ENCODE measurements at regions of chr7 and their contacts with region 1.

Region 1: DNA sequence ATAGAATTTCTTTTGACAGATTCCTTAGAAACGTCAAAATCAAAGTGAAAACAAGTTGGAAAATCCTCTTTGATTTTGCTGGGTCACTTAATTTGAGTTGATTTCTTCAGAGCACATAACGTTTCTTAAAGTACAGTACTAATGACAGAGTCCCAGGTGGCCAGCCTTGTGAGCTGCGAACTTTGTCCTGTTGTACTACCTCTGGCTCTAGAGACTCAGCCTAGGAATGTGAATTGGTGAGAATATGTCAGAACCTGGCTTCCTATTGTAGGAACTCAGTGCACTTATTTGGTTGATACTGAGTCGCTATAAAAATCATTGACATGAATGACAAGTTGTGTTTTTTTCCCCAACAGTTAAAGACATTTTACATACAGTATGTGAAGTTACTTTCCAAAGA is 20.2 kb downstream of the SDK1 start:
- DNase-seq: peak in 1 of 2 experiments; percentile 19
- H3K4me3 ChIP-seq: no peak overlapping the region
- H3K4me3 Mint-ChIP-seq: peak overlapping the region; percentile 63
- H3K27ac Mint-ChIP-seq: peak overlapping the region; percentile 54
- H3K4me1 ChIP-seq: 0 out of 2 replicates have a peak, but pooled peaks cover 5% of the 10 kb centered on the region
- H3K4me1 Mint-ChIP-seq: peaks cover 7% of the 10 kb centered on the region
- H3K27me3 ChIP-seq: no peaks in the 10 kb centered on the region
- H3K27me3 Mint-ChIP-seq: no peaks in the 10 kb centered on the region
- CTCF ChIP-seq: no peak

Region 2: GRCh38 chr7:3267966-3268690 is 53.1 kb before region 1 on chr7:
- CTCF ChIA-PET with region 1: no interaction called
- POLR2A ChIA-PET with region 1: no interaction called
- intact Hi-C with region 1: loop called (anchors 10 kb)
- DNase-seq: no peak
- H3K4me3 ChIP-seq: no peak overlapping the region
- H3K4me3 Mint-ChIP-seq: no peak overlapping the region
- H3K27ac Mint-ChIP-seq: no peak overlapping the region
- H3K4me1 ChIP-seq: no peaks in the 10 kb centered on the region
- H3K4me1 Mint-ChIP-seq: peaks cover 12% of the 10 kb centered on the region
- H3K27me3 ChIP-seq: no peaks in the 10 kb centered on the region
- H3K27me3 Mint-ChIP-seq: peaks cover 7% of the 10 kb centered on the region
- CTCF ChIP-seq: no peak

Region 3: DNA sequence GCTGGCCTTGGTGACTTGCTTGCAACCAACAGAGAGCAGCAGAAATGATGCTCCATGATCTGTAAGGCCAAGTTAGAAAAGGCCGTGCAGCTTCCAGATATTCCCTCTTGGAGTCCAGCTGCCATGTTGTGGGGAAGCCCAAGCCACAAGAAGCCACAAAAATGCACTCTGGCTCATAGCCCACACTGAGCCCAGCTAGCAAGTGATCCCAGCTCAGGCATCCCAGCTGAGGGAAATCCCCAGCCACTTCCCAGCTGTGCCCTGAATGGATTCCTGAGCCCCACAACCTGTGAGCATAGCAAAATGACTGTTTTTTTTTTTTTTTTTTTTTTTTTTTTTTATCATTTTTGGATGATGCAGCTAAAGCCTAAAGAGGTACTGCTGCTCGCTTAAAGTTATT is 31.2 kb before region 1 on chr7:
- CTCF ChIA-PET with region 1: no interaction called
- POLR2A ChIA-PET with region 1: no interaction called
- intact Hi-C with region 1: no loop called
- DNase-seq: no peak
- H3K4me3 ChIP-seq: no peak overlapping the region
- H3K4me3 Mint-ChIP-seq: no peak overlapping the region
- H3K27ac Mint-ChIP-seq: no peak overlapping the region
- H3K4me1 ChIP-seq: no peaks in the 10 kb centered on the region
- H3K4me1 Mint-ChIP-seq: no peaks in the 10 kb centered on the region
- H3K27me3 ChIP-seq: no peaks in the 10 kb centered on the region
- H3K27me3 Mint-ChIP-seq: no peaks in the 10 kb centered on the region
- CTCF ChIP-seq: no peak